T-cell (primary cell): ENCODE measurements at regions of chrX and their contacts with region 1.

Region 1: GRCh38 chrX:9927698-9928482 is 39.3 kb upstream of the CLDN34 start:
- DNase-seq: no peak
- ATAC-seq: no peak
- H3K4me3 ChIP-seq: no peak overlapping the region
- H3K4me3 Mint-ChIP-seq: no peak overlapping the region
- H3K27ac ChIP-seq: no peak overlapping the region
- H3K27ac Mint-ChIP-seq: no peak overlapping the region
- H3K4me1 ChIP-seq: no peaks in the 10 kb centered on the region
- H3K4me1 Mint-ChIP-seq: no peaks in the 10 kb centered on the region
- H3K27me3 ChIP-seq: no peaks in the 10 kb centered on the region
- H3K27me3 Mint-ChIP-seq: peaks cover 0 to 7% of the 10 kb centered on the region in 2 donors

Region 2: GRCh38 chrX:9746148-9746888 is 181.6 kb before region 1 on chrX:
- CTCF ChIA-PET with region 1: no interaction called
- POLR2A ChIA-PET with region 1: interaction called in 1 of 2 experiments, 11 read pairs
- DNase-seq: no peak
- ATAC-seq: no peak
- H3K4me3 ChIP-seq: no peak overlapping the region
- H3K4me3 Mint-ChIP-seq: no peak overlapping the region
- H3K27ac ChIP-seq: no peak overlapping the region
- H3K27ac Mint-ChIP-seq: no peak overlapping the region
- H3K4me1 ChIP-seq: peaks cover 0 to 7% of the 10 kb centered on the region in 2 experiments
- H3K4me1 Mint-ChIP-seq: peaks cover 14 to 20% (median 16%) of the 10 kb centered on the region in 3 donors
- H3K27me3 ChIP-seq: peaks cover 0 to 3% of the 10 kb centered on the region in 2 experiments
- H3K27me3 Mint-ChIP-seq: peaks cover 0 to 13% of the 10 kb centered on the region in 2 donors